ENCODE measurements at regions of chr1 and their contacts with region 1.

Region 1: GRCh38 chr1:179365320-179366092 is at the start of gene AXDND1:
- DNase-seq: peak; percentile 97
- H3K4me3 ChIP-seq: peak within 1 kb of the TSS; percentile 63 to 80 (median 68)
- H3K27ac ChIP-seq: peak within 1 kb of the TSS; percentile 84 to 92 (median 90)
- H3K4me1 ChIP-seq: peaks cover 3 to 13% (median 10%) of the 10 kb centered on the region in 4 donors
- H3K27me3 ChIP-seq: no peaks in the 10 kb centered on the region
- CTCF ChIP-seq: peak in 1 of 3 experiments; percentile 2
- EP300 ChIP-seq: no peak
- POLR2A ChIP-seq: no peak
- total RNA-seq, gene AXDND1: 2.5 TPM in 1 of 4 donors, not detected in the others

Region 2: DNA sequence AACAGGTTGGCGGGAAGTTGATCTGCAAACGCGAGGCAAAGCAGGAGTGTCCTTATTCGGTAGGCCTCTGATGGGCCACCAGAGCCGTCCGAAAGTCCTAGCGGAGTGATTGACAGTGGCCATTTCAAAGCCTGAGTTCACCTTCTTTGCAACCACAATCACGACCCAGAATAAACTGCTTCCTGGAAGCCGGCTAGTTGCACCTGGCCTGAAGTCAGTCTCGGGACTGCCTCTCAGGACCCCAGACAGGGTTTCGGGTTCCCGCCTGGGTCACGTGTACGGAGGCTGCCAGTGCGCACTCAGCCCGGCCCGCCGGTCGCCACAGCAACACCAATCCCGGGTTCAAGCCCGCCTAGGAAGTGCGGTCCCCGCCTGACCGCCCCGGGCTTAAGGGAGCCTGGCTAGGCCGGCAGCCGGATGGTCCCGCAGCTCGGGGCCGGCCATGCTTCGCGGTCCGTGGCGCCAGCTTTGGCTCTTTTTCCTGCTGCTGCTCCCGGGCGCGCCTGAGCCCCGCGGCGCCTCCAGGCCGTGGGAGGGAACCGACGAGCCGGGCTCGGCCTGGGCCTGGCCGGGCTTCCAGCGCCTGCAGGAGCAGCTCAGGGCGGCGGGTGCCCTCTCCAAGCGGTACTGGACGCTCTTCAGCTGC is 283.7 kb before region 1 on chr1 and contains the start of gene TOR3A:
- intact Hi-C with region 1: loop called (anchors 2 kb)
- DNase-seq: peak; percentile 98
- H3K4me3 ChIP-seq: peak within 1 kb of the TSS; percentile 83 to 93 (median 89)
- H3K27ac ChIP-seq: peak within 1 kb of the TSS; percentile 87 to 95 (median 91)
- H3K4me1 ChIP-seq: peaks cover 15 to 32% (median 24%) of the 10 kb centered on the region in 4 donors
- H3K27me3 ChIP-seq: no peaks in the 10 kb centered on the region
- CTCF ChIP-seq: no peak
- EP300 ChIP-seq: no peak
- POLR2A ChIP-seq: peak; percentile 83
- total RNA-seq, gene TOR3A: 38.6 to 55.8 (median 39.1) TPM

Region 3: GRCh38 chr1:179121159-179121938 is 244.2 kb before region 1 on chr1:
- intact Hi-C with region 1: loop called (anchors 5 kb)
- DNase-seq: no peak
- H3K4me3 ChIP-seq: no peak overlapping the region
- H3K27ac ChIP-seq: no peak overlapping the region
- H3K4me1 ChIP-seq: peaks cover 0 to 4% (median 3%) of the 10 kb centered on the region in 4 donors
- H3K27me3 ChIP-seq: no peaks in the 10 kb centered on the region
- CTCF ChIP-seq: peak; percentile 61 to 67 (median 66)
- EP300 ChIP-seq: no peak
- POLR2A ChIP-seq: no peak

Region 4: GRCh38 chr1:179247923-179248322 is 117.6 kb before region 1 on chr1:
- intact Hi-C with region 1: loop called (anchors 5 kb)
- DNase-seq: no peak
- H3K4me3 ChIP-seq: no peak overlapping the region
- H3K27ac ChIP-seq: no peak overlapping the region
- H3K4me1 ChIP-seq: no peaks in the 10 kb centered on the region
- H3K27me3 ChIP-seq: no peaks in the 10 kb centered on the region
- CTCF ChIP-seq: no peak
- EP300 ChIP-seq: no peak
- POLR2A ChIP-seq: no peak

Region 5: GRCh38 chr1:179293340-179294327 is 71.9 kb before region 1 on chr1 and contains the start of gene SOAT1:
- intact Hi-C with region 1: loop called (anchors 10 kb)
- DNase-seq: peak; percentile 98
- H3K4me3 ChIP-seq: peak within 1 kb of the TSS; percentile 67 to 76 (median 72)
- H3K27ac ChIP-seq: peak within 1 kb of the TSS; percentile 85 to 92 (median 90)
- H3K4me1 ChIP-seq: peaks cover 6 to 28% (median 25%) of the 10 kb centered on the region in 4 donors
- H3K27me3 ChIP-seq: no peaks in the 10 kb centered on the region
- CTCF ChIP-seq: peak in 2 of 3 experiments; percentile 11 to 21
- EP300 ChIP-seq: no peak
- POLR2A ChIP-seq: peak; percentile 56
- total RNA-seq, gene SOAT1: 10.8 to 19.7 (median 13.2) TPM

Measured in esophagus muscularis mucosa (tissue), 4 donors.